SK-N-SH (cell line): ENCODE measurements at regions of chr5 and their contacts with region 1.

Region 1: DNA sequence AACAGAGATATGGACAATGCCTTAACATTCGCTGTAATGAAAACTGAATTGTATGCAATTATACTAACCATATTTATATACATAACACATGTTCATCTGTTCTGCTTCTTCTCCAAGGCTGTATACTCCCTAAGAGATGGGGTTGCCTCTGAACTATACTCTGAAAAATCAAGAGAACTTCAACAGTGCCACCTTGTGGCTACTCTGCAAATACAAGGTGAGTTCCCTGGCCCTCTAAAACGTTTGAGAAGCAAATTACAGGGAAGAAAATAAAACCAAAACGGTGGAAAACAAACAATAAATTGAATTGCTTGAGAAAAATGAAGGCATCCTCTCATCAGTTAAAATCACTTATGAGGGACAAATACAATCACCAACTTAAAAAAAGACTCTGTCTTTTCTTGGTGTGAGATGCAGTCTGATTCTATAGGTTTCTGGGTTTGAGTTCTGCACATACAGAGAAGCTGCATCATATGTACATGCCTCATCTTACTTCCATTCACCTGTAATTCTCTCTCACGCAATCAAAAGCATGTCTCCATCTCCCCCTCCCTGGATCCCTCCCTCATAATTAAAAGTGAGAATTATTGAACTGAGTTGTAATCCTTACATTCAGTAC is 98.6 kb downstream of the FBXW11 start:
- DNase-seq: peak; percentile 52
- H3K4me3 ChIP-seq: peak overlapping the region in 1 of 2 experiments; percentile 12; a peak in 1 of 4 replicates
- H3K27ac ChIP-seq: no peak overlapping the region
- H3K4me1 ChIP-seq: peaks cover 0 to 7% of the 10 kb centered on the region in 2 experiments; a peak in 2 of 4 replicates
- H3K27me3 ChIP-seq: no peaks in the 10 kb centered on the region
- CTCF ChIP-seq: peak; percentile 85
- EP300 ChIP-seq: peak in 1 of 2 experiments; percentile 25; a peak in 1 of 4 replicates
- RAD21 ChIP-seq: peak; percentile 88

Region 2: DNA sequence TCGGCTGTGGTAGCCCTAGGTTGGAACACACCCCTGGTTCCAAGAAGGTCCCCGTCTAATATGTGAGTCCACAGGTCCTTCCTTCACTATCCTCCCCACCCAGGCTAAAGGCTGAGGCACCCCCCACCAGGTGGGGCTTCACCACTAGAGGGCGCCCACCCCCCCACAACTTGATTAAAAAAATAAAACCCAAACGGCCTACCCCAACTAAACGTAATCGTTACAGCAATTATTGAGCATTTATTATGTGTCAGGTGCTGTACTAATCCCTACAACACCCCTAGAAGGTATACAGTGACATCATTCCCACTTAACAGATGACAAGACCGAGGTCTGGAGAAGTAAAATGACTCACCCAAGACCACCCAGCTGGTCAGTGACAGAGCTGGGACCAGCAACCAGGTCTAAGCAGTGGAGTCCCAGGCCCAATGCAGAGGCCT is 423.4 kb before region 1 on chr5:
- CTCF ChIA-PET with region 1: interaction called, 13 read pairs
- POLR2A ChIA-PET with region 1: no interaction called
- DNase-seq: peak; percentile 82
- H3K4me3 ChIP-seq: no peak overlapping the region
- H3K27ac ChIP-seq: no peak overlapping the region
- H3K4me1 ChIP-seq: no peaks in the 10 kb centered on the region
- H3K27me3 ChIP-seq: no peaks in the 10 kb centered on the region
- CTCF ChIP-seq: peak; percentile 87
- EP300 ChIP-seq: no peak
- RAD21 ChIP-seq: peak; percentile 60

Region 3: DNA sequence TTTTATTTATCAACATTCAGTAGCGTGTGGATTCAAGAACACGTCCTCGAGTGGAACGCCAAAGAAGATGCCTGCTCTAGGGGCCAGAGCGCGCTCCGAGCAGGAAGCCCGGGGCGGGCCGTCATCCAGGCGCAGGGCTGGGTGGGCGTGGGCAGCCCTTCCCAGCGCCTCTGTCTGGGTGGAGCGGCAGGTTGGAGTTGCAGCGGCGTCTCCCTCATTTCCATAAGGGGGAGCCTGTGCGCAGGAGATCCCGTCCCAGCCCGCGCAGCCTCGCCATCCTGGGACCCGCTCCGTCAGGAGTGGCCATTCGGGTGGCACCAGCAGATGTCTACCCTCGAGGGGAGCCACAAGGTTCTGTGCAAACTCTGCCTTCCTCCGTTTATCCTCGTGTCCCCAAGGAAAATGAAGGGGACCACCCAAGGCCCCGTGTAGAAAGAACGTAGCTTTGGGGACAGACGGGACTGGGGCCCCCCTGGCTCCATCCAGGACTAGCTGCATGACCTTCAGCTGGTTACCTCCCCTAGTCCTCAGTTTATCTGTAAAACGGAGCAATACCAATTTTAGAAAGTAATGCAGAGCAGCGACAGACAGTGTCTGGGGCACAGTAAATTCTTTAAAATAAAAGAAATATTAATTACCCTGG is 277.7 kb before region 1 on chr5:
- CTCF ChIA-PET with region 1: interaction called, 33 read pairs
- POLR2A ChIA-PET with region 1: no interaction called
- DNase-seq: peak; percentile 91
- H3K4me3 ChIP-seq: peak overlapping the region in 1 of 2 experiments; percentile 21; a peak in 2 of 4 replicates
- H3K27ac ChIP-seq: no peak overlapping the region
- H3K4me1 ChIP-seq: peaks cover 0 to 11% of the 10 kb centered on the region in 2 experiments; a peak in 1 of 4 replicates
- H3K27me3 ChIP-seq: 0 out of 2 replicates have a peak, but pooled peaks cover 9% of the 10 kb centered on the region
- CTCF ChIP-seq: peak; percentile 47
- EP300 ChIP-seq: no peak
- RAD21 ChIP-seq: peak; percentile 78

Region 4: GRCh38 chr5:171920765-171921391 is 13.0 kb after region 1 on chr5:
- CTCF ChIA-PET with region 1: interaction called, 41 read pairs
- POLR2A ChIA-PET with region 1: no interaction called
- DNase-seq: no peak
- H3K4me3 ChIP-seq: no peak overlapping the region
- H3K27ac ChIP-seq: no peak overlapping the region
- H3K4me1 ChIP-seq: no peaks in the 10 kb centered on the region; a peak in 1 of 4 replicates
- H3K27me3 ChIP-seq: no peaks in the 10 kb centered on the region
- CTCF ChIP-seq: no peak
- EP300 ChIP-seq: no peak
- RAD21 ChIP-seq: no peak

Region 5: DNA sequence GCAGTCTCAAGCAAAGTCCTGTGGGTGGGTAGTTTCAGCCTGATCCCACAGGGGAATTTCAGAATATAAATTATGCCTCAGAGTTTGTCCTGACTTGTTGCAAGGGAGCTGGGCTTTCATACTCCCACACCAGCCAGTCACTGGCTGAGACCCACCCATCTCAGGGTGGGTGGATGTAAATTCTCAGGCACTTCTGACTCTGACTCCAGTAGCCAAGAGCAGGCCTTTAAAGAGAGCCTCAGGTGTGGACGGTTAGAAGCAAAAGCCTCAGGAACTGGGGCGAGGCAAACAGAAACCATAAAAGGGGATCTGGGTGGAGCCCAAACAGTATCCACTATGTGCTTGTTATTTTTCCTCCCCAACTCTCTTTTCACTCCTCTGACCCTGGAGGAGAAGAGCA is 127.2 kb after region 1 on chr5:
- CTCF ChIA-PET with region 1: interaction called, 19 read pairs
- POLR2A ChIA-PET with region 1: no interaction called
- DNase-seq: no peak
- H3K4me3 ChIP-seq: no peak overlapping the region
- H3K27ac ChIP-seq: no peak overlapping the region
- H3K4me1 ChIP-seq: no peaks in the 10 kb centered on the region
- H3K27me3 ChIP-seq: no peaks in the 10 kb centered on the region
- CTCF ChIP-seq: no peak
- EP300 ChIP-seq: no peak
- RAD21 ChIP-seq: no peak